ENCODE measurements at regions of chr18 and their contacts with region 1.

Region 1: DNA sequence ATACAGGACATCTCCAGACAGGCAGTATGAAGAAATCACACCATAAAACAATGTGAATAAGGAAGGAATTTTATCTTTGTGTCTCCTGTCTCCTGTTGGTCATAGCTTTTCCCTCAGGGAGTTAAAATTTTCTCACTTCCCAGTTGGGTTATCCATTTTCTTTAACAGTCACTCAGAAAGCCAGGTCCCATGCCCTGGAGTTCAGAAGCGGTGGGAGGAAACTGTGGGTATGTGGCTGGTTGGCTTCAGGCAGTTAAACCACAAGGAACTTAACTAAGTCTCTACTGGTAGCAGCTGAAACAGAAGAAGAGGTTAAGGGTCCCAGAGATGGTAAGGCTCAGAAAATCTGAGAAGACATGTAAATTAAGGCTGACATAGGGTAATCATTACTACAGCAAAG is 6.5 kb upstream of the SMAD2 start:
- DNase-seq: no peak
- H3K4me3 ChIP-seq: no peak overlapping the region
- H3K27ac ChIP-seq: no peak overlapping the region
- H3K4me1 ChIP-seq: peaks cover 0 to 2% (median 0%) of the 10 kb centered on the region in 4 donors
- H3K27me3 ChIP-seq: no peaks in the 10 kb centered on the region
- CTCF ChIP-seq: no peak
- EP300 ChIP-seq: no peak
- POLR2A ChIP-seq: no peak

Region 2: GRCh38 chr18:48007955-48008701 is 71.2 kb after region 1 on chr18:
- intact Hi-C with region 1: loop called (anchors 5 kb)
- DNase-seq: no peak
- H3K4me3 ChIP-seq: peak overlapping the region; percentile 55 to 80 (median 61)
- H3K27ac ChIP-seq: no peak overlapping the region
- H3K4me1 ChIP-seq: peaks cover 11 to 14% (median 13%) of the 10 kb centered on the region in 4 donors
- H3K27me3 ChIP-seq: no peaks in the 10 kb centered on the region
- CTCF ChIP-seq: peak; percentile 37 to 93 (median 74)
- EP300 ChIP-seq: no peak
- POLR2A ChIP-seq: no peak